ENCODE measurements at regions of chr4 and their contacts with region 1.

Region 1: DNA sequence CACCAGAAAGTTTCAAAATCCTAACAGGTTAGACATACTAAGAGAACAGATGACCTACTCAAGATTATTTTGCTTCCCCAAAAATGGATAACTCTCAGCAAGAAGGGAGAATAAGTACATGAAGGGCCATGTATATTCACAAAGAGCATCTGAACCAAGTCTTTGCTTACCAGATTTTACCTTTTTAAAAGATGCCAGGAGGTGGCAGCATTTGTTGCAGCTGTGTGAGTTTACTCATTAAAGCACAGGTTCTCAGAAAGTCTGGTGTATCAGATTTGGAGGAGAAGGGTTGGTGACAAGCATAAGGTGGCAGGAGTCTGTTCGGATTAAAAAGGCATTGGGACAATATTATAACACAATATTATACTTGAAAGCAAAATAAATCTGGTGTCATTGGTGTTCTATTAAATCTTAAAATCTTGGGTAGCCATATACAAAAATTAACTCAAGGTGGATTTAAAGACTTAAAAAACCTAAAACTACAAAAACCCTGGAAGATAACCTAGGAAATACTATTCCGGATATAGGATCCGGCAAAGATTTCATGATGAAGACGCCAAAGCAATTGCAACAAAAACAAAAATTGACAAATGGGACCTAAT is 51.3 kb upstream of the NFKB1 start:
- DNase-seq: peak in 1 of 3 donors; percentile 17
- ATAC-seq: peak in 1 of 2 donors; percentile 63
- H3K4me3 ChIP-seq: no peak overlapping the region
- H3K27ac ChIP-seq: no peak overlapping the region
- H3K4me1 ChIP-seq: no peaks in the 10 kb centered on the region
- H3K27me3 ChIP-seq: no peaks in the 10 kb centered on the region

Region 2: DNA sequence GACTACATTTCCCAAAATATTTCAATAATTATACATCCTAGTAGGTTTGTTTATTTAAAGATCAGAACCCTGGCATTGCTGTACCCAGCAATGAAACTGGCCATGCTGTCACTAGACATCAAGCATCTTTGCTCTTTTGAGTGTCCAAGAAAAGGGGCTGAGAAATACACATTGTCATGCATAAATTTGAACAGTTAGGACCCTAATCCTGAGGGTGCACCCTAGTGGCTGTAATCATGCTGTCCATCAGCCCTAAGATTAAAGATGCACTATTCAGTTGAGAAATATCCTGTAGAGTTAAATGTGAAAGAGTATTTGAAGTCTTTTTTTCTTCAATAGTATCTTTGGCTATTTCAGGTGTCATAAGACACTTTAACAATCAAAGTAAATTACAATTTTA is 160.2 kb after region 1 on chr4:
- intact Hi-C with region 1: loop called in 2 of 4 experiments (anchors 10 kb)
- DNase-seq: no peak
- ATAC-seq: no peak
- H3K4me3 ChIP-seq: no peak overlapping the region
- H3K27ac ChIP-seq: no peak overlapping the region
- H3K4me1 ChIP-seq: peaks cover 2% of the 10 kb centered on the region
- H3K27me3 ChIP-seq: no peaks in the 10 kb centered on the region

Region 3: DNA sequence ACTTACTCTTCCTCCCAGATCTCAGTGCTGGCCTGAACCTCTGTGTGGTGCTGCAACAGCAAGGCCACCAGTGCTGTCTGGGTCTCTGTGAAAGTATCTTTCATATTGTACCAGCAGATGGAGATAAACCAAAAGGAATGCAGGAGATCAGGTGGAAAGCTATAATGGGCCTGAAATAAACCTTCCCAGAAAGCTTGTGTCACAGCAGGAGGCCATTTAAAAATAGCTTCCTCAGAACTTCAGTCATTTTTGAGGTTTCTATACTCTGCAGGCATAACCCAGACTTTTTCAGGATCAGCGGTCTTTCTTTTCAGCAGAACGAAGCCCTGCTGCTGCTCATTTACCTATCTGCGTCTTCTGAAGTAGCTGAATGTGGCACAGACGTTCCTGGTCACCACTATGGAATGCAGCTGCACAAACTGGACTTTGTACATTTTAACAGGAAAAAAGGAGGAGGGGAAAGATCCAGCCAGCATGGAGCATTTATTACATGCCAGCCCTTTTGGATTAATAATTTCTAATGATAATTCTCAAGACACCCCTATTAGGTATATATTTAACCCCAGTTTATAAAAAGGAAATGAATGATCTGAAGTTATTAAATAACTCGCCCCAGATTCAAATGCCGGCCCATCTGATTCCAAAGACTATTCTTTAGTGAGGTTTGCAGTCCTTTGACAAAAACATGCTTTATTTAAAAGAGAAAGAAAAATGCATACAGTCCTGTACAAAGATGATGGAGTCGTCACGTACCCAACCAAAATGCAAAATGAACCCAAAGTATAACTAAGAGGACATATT is 171.0 kb after region 1 on chr4:
- intact Hi-C with region 1: loop called in 2 of 4 experiments (anchors 10 kb)
- DNase-seq: peak in 1 of 3 donors; percentile 66
- ATAC-seq: peak; percentile 85 to 94
- H3K4me3 ChIP-seq: no peak overlapping the region
- H3K27ac ChIP-seq: no peak overlapping the region
- H3K4me1 ChIP-seq: peaks cover 2% of the 10 kb centered on the region
- H3K27me3 ChIP-seq: no peaks in the 10 kb centered on the region

Region 4: DNA sequence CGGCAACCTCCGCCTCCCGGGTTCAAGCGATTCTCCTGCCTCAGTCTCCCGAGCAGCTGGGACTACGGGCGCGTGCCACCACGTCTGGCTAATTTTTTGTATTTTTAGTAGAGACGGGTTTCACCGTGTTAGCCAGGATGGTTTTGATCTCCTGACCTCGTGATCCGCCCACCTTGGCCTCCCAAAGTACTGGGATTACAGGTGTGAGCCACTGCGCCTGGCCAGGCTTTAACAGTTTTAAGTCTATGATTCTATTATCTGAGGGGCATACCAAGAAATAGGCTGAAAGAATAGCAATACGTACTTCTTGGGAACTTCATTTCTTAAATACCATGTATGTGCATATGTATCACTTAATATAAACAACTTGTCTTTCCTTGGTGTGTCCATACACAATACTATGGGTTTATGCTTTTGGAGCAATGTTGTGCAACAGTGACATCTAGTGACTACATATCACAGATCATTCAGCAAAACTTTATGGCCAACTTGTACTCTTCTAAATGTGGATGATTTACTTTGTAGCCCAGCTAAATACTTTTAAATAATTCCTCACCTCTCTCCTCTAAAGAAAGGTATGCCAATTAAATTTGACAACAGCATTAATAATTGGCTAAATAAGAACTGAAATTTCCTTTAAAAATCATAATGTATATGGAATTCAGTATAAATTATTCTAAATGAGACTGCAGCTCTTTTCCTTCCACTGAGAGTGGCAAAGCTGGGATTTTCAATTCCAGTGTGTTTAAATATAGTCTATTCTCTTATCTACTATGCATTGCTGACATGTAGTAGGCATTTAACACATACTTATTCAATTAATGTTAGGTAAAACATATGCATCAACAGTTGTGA is 559.2 kb after region 1 on chr4:
- intact Hi-C with region 1: loop called (anchors 5 to 10 kb)
- DNase-seq: peak in 1 of 3 donors; percentile 38
- ATAC-seq: peak; percentile 81 to 85
- H3K4me3 ChIP-seq: no peak overlapping the region
- H3K27ac ChIP-seq: no peak overlapping the region
- H3K4me1 ChIP-seq: peaks cover 3% of the 10 kb centered on the region
- H3K27me3 ChIP-seq: no peaks in the 10 kb centered on the region

Region 5: GRCh38 chr4:103019308-103020124 is 569.7 kb after region 1 on chr4 and contains the start of gene SLC9B1:
- intact Hi-C with region 1: loop called in 2 of 4 experiments (anchors 5 to 10 kb)
- DNase-seq: peak; percentile 97 to 99 (median 98)
- ATAC-seq: peak; percentile 99
- H3K4me3 ChIP-seq: peak within 1 kb of the TSS; percentile 64
- H3K27ac ChIP-seq: peak within 1 kb of the TSS; percentile 83
- H3K4me1 ChIP-seq: no peaks in the 10 kb centered on the region
- H3K27me3 ChIP-seq: no peaks in the 10 kb centered on the region
- total RNA-seq, gene SLC9B1: 0.94 to 1.8 (median 1.3) TPM

Region 6: DNA sequence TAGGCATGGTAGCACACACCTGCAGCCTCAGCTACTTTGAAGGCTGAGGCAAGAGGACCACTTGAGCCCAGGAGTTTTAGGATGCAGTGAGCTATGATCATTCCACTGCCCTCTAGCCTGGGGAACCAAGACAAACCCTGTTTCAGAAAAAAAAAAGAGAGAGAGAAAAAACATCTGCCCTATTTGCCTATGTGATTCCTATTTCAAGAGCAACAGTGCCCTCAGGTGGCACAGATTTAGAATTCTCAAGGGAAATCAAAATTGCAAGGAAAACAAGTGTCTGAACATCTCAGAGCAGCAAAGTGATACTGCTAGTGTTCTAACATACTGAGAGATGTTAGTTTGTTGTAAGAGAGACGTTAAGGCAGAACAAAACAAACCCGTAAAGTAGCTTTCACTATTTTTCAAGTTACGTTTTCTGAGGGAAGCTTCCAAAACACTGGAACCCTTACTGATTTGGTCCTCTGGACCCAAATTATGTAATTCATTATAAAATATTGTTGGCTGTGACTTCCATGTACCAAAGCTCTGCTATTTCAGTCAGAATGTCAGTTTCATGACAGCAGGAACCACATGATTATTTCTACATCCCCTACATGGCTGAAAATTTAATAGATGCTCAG is 641.9 kb after region 1 on chr4:
- intact Hi-C with region 1: loop called in 1 of 4 experiments (anchors 5 kb)
- DNase-seq: no peak
- ATAC-seq: no peak
- H3K4me3 ChIP-seq: no peak overlapping the region
- H3K27ac ChIP-seq: no peak overlapping the region
- H3K4me1 ChIP-seq: no peaks in the 10 kb centered on the region
- H3K27me3 ChIP-seq: no peaks in the 10 kb centered on the region

Measured in right cardiac atrium (tissue), 5 donors.